Activated CD4-positive, alpha-beta T cell treated with anti-CD3 and anti-CD28 coated beads, Interleukin-2, amount 10 ng/mL, durations not matched to agents 24 days and 14 days (primary cell): ENCODE measurements at regions of chr1 and their contacts with region 1.

Region 1: GRCh38 chr1:178752891-178753290 is 27.8 kb downstream of the RALGPS2 start:
- DNase-seq: no peak
- H3K4me3 Mint-ChIP-seq: no peak overlapping the region
- H3K27ac Mint-ChIP-seq: no peak overlapping the region
- H3K4me1 Mint-ChIP-seq: peaks cover 3% of the 10 kb centered on the region
- H3K27me3 Mint-ChIP-seq: peaks cover 2% of the 10 kb centered on the region

Region 2: GRCh38 chr1:178310685-178311105 is 442.2 kb before region 1 on chr1:
- intact Hi-C with region 1: loop called (anchors 5 kb)
- DNase-seq: peak; percentile 58
- H3K4me3 Mint-ChIP-seq: no peak overlapping the region
- H3K27ac Mint-ChIP-seq: no peak overlapping the region
- H3K4me1 Mint-ChIP-seq: no peaks in the 10 kb centered on the region
- H3K27me3 Mint-ChIP-seq: peaks cover 2% of the 10 kb centered on the region

Region 3: DNA sequence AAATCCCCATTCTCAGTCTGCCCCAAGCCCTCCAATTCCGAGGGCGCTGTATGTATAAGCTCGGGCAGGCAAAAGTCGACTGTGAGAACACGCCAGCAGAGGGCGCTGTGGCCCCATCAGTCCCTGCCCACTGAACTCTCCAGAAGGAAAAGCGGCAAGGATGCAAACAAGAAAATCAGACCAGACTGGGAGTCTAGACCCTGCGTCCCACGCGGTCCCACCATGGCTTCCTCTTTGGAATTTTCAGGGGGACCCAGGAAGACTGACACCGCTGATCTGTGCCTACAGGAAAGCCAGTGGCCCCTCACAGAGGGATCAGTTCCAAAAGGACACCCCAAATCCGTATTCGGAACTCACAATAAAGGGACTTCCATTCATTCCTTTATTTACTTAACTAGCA is 220.5 kb before region 1 on chr1:
- intact Hi-C with region 1: loop called (anchors 1 kb)
- DNase-seq: peak; percentile 92
- H3K4me3 Mint-ChIP-seq: no peak overlapping the region
- H3K27ac Mint-ChIP-seq: no peak overlapping the region
- H3K4me1 Mint-ChIP-seq: peaks cover 2% of the 10 kb centered on the region
- H3K27me3 Mint-ChIP-seq: no peaks in the 10 kb centered on the region

Region 4: GRCh38 chr1:178542560-178543356 is 210.1 kb before region 1 on chr1:
- intact Hi-C with region 1: loop called (anchors 1 kb)
- DNase-seq: peak; percentile 97
- H3K4me3 Mint-ChIP-seq: peak overlapping the region; percentile 91
- H3K27ac Mint-ChIP-seq: peak overlapping the region; percentile 87
- H3K4me1 Mint-ChIP-seq: no peaks in the 10 kb centered on the region
- H3K27me3 Mint-ChIP-seq: no peaks in the 10 kb centered on the region